Activated naive CD4-positive, alpha-beta T cell treated with anti-CD3 and anti-CD28 coated beads, Interleukin-2, amount 10 ng/mL, durations not matched to agents 7 days and 5 days (primary cell): ENCODE measurements at regions of chr10 and their contacts with region 1.

Region 1: GRCh38 chr10:110210674-110211464 is 3.5 kb downstream of the MXI1 start:
- DNase-seq: peak; percentile 95
- H3K4me3 Mint-ChIP-seq: peak overlapping the region; percentile 93
- H3K27ac Mint-ChIP-seq: peak overlapping the region; percentile 97
- H3K4me1 Mint-ChIP-seq: peaks cover 62% of the 10 kb centered on the region
- H3K27me3 Mint-ChIP-seq: peaks cover 20% of the 10 kb centered on the region

Region 2: GRCh38 chr10:110225756-110226542 is 15.1 kb after region 1 on chr10:
- CTCF ChIA-PET with region 1: interaction called, 70 read pairs
- DNase-seq: peak; percentile 90
- H3K4me3 Mint-ChIP-seq: peak overlapping the region; percentile 92
- H3K27ac Mint-ChIP-seq: peak overlapping the region; percentile 97
- H3K4me1 Mint-ChIP-seq: peaks cover 54% of the 10 kb centered on the region
- H3K27me3 Mint-ChIP-seq: peaks cover 31% of the 10 kb centered on the region

Region 3: GRCh38 chr10:110279407-110279986 is 68.6 kb after region 1 on chr10:
- CTCF ChIA-PET with region 1: interaction called, 54 read pairs
- DNase-seq: peak; percentile 59
- H3K4me3 Mint-ChIP-seq: no peak overlapping the region
- H3K27ac Mint-ChIP-seq: no peak overlapping the region
- H3K4me1 Mint-ChIP-seq: peaks cover 12% of the 10 kb centered on the region
- H3K27me3 Mint-ChIP-seq: no peaks in the 10 kb centered on the region

Region 4: GRCh38 chr10:110304780-110305421 is 94.0 kb after region 1 on chr10 and contains the start of gene SMNDC1:
- CTCF ChIA-PET with region 1: interaction called, 14 read pairs
- DNase-seq: peak; percentile 98
- H3K4me3 Mint-ChIP-seq: peak within 1 kb of the TSS; percentile 93
- H3K27ac Mint-ChIP-seq: peak within 1 kb of the TSS; percentile 98
- H3K4me1 Mint-ChIP-seq: peaks cover 53% of the 10 kb centered on the region
- H3K27me3 Mint-ChIP-seq: no peaks in the 10 kb centered on the region

Region 5: DNA sequence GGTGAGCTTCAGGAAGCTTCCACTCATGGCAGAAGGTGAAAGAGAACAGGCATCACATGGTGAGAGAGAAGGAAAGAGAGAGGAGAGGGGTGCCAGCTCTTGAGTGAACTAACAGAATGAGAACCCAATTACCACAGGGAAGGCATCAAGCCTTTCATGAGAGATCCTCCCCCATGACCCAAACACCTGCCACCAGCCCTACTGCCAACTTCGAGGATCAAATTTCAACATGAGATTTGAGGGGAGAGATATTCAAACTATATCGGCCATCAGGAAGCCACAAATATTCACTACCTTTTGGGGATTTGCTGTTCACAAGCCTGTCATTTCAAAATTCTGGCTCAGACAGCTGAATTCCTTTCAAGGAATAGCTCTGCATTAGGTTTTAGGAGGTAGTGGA is 133.8 kb after region 1 on chr10:
- CTCF ChIA-PET with region 1: no interaction called
- DNase-seq: no peak
- H3K4me3 Mint-ChIP-seq: no peak overlapping the region
- H3K27ac Mint-ChIP-seq: no peak overlapping the region
- H3K4me1 Mint-ChIP-seq: no peaks in the 10 kb centered on the region
- H3K27me3 Mint-ChIP-seq: peaks cover 46% of the 10 kb centered on the region